Posterior cingulate gyrus (tissue), 11 donors: ENCODE measurements at regions of chr6 and their contacts with region 1.

Region 1: DNA sequence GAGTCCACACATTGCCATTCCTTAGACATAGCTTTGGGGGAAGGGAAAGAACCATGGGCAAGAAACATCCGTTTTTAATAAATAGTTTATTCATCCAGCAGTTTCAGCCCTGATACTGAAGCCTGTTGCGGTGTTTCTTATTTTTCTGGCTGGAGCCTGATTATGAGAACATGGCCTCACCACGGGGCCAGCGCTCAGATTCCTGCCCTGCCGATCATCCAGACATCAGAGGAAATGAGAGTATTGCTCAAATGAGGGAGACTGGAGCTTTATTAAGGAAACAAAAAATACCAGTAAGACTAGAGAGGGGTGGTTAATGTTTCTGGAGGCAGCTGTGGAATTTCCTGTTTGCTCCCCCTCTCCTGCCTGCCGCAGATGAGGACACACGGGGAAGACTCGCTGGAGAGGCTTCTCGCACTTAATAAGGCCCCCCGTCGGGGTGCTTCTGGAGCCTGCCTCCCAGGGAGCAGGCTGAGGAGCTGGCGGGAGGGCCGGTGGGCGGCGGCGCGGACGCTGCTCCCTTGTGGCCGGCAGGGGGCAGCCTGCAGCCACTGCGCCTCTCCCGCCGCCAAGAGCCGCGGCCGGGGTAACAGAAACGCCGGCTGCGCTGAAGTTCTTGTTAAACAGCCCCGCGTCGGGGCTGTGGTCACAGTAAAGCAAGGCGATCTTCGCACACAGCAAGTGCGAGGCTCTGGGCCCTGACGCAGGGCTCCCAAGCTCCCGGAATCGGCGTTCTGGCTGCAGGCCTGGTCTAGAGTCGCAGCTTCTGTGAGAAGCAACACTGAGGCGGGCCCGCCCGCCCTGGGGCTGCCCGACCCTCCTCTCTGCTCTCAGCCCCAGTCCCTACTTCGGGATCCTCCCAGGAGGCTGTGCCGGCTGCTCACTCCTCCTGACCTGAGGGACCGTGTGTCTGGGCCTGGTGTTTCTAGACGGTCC is 17.5 kb downstream of the LEMD2 start:
- DNase-seq: peak; percentile 41 to 96 (median 63)

Region 2: DNA sequence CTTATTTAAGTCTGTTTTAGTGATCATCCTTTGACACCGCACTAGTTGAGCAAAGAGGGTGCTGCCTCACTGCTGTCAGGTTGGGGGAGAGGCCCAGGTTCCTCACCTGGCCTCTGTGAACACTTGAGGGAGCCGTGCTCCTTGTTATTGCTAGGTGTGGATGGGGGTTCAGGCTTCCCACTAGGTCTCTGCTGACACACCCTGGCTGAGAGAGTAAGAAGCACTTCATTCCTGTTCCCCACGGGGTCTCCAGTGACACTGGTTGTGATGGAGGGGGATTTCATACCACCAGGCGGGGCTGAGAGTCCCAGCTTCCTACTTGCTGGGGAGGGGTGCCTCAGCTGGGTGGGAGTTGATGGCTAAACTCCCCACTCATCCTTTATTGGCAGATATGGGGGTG is 1536.5 kb before region 1 on chr6:
- intact Hi-C with region 1: no loop called
- DNase-seq: no peak

Region 3: DNA sequence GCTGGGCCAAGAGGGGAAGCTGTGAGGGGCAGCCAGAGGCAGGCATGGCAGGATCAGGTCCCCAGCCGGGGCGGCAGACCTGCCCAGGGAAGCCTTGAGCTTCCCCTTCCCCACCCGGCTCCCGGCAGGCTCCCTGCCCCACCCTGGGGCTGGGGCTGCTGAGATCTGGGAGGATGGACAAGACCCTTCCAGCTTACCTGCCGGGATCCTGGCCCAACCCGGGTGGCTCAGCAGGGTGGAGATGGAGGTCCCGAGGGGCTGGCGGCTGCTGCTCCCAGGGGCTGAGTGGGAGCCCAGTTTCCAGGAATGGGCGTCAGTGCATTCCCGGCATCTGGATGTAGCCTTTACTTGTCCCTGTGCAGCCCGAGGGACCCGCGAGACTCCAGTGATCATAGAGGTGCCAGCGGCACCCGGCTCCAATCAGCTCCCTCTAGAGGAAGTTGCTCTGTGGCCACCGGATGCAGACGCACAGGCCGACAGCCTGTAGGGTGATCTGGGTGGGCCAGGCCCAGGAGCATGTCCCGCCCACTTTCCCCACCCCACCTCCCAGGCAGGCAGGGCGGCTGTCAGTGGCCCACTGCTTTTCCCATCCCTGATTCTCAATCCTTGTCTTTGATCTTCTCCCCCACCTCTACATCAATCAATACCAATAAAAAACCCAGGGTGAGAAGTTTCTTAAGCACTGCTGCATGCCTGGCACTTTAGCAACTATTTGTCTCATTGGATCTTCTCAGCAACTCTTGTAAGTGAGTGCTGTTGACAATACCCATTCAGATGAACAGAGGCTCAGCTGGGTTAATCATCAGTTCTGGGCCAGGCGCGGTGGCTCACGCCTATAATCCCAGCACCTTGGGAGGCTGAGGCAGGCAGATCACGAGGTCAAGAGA is 191.3 kb before region 1 on chr6 and contains the start of gene BAK1:
- intact Hi-C with region 1: loop called (anchors 10 kb)
- DNase-seq: peak; percentile 82 to 99 (median 94)

Region 4: DNA sequence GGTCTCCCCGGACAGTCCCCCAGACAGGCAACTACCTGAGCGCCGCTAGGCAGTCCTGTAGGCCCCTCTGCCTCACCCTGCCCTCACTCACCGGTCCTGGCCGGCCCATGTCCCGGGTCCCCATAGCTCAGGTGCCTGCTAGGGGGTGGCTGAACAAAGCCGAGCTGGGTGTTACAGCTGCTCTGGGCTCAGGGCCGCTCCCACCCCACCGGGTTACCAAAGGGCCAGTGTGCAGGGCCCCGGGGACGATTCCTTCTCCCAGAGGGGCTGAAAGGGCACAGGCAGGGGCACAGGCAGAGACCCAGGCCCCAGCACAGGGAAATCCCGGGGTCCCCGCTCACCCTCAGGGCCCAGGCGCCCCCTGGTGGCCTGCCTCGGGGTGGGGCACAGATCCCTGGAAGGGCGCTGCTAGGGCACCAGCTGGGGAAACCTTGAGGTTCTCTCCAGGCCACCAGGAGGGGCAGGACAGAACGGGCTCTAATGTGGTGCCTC is 256.1 kb after region 1 on chr6:
- intact Hi-C with region 1: loop called (anchors 2 kb)
- DNase-seq: peak in 4 of 10 donors; percentile 34 to 87 (median 66)

Region 5: GRCh38 chr6:34546551-34547321 is 775.3 kb after region 1 on chr6:
- intact Hi-C with region 1: no loop called
- DNase-seq: peak in 7 of 10 donors; percentile 45 to 83 (median 56)